Panc1 (cell line): ENCODE measurements at regions of chr3 and their contacts with region 1.

Region 1: GRCh38 chr3:126522363-126522788 is 1.6 kb upstream of the CHST13 start:
- DNase-seq: peak; percentile 25
- ATAC-seq: peak; percentile 52
- H3K4me3 ChIP-seq: no peak overlapping the region
- H3K27ac ChIP-seq: no peak overlapping the region
- H3K4me1 ChIP-seq: peaks cover 4% of the 10 kb centered on the region; the same call in 1 of the 2 replicates
- H3K27me3 ChIP-seq: peaks cover 8% of the 10 kb centered on the region
- CTCF ChIP-seq: peak; percentile 95

Region 2: GRCh38 chr3:126474498-126475412 is 47.6 kb before region 1 on chr3:
- CTCF ChIA-PET with region 1: interaction called, 12 read pairs
- POLR2A ChIA-PET with region 1: no interaction called
- in situ Hi-C with region 1: no loop called
- intact Hi-C with region 1: no loop called
- DNase-seq: no peak
- ATAC-seq: peak; percentile 9
- H3K4me3 ChIP-seq: peak overlapping the region; percentile 75 to 89
- H3K27ac ChIP-seq: peak overlapping the region; percentile 82
- H3K4me1 ChIP-seq: peaks cover 22% of the 10 kb centered on the region
- H3K27me3 ChIP-seq: no peaks in the 10 kb centered on the region
- CTCF ChIP-seq: no peak